A673 (cell line): ENCODE measurements at regions of chr1 and their contacts with region 1.

Region 1: GRCh38 chr1:213122514-213122929 is 71.5 kb downstream of the RPS6KC1 start:
- DNase-seq: peak; percentile 65
- H3K4me3 ChIP-seq: no peak overlapping the region
- H3K27ac ChIP-seq: no peak overlapping the region
- H3K4me1 ChIP-seq: no peaks in the 10 kb centered on the region
- H3K27me3 ChIP-seq: no peaks in the 10 kb centered on the region
- CTCF ChIP-seq: peak; percentile 68

Region 2: GRCh38 chr1:213330281-213330680 is 207.8 kb after region 1 on chr1:
- CTCF ChIA-PET with region 1: no interaction called
- POLR2A ChIA-PET with region 1: interaction called, 12 read pairs
- intact Hi-C with region 1: no loop called
- DNase-seq: no peak
- H3K4me3 ChIP-seq: no peak overlapping the region
- H3K27ac ChIP-seq: no peak overlapping the region
- H3K4me1 ChIP-seq: peaks cover 7% of the 10 kb centered on the region
- H3K27me3 ChIP-seq: peaks cover 46% of the 10 kb centered on the region
- CTCF ChIP-seq: no peak